ENCODE measurements at regions of chr13 and their contacts with region 1.

Region 1: GRCh38 chr13:46160471-46161066 is 21.4 kb downstream of the LCP1 start:
- DNase-seq: peak in 7 of 9 donors; percentile 59 to 78 (median 74)
- ATAC-seq: peak; percentile 91
- H3K4me3 ChIP-seq: no peak overlapping the region
- H3K4me3 Mint-ChIP-seq: peak overlapping the region; percentile 27 to 82 (median 74)
- H3K27ac ChIP-seq: peak overlapping the region; percentile 69
- H3K27ac Mint-ChIP-seq: peak overlapping the region; percentile 79 to 97 (median 91)
- H3K4me1 ChIP-seq: peaks cover 33 to 46% of the 10 kb centered on the region in 2 donors
- H3K4me1 Mint-ChIP-seq: peaks cover 49 to 58% (median 54%) of the 10 kb centered on the region in 7 donors
- H3K27me3 ChIP-seq: no peaks in the 10 kb centered on the region
- H3K27me3 Mint-ChIP-seq: no peaks in the 10 kb centered on the region

Region 2: GRCh38 chr13:46111151-46111550 is 49.4 kb before region 1 on chr13:
- CTCF ChIA-PET with region 1: no interaction called
- POLR2A ChIA-PET with region 1: no interaction called
- intact Hi-C with region 1: no loop called
- DNase-seq: no peak
- ATAC-seq: no peak
- H3K4me3 ChIP-seq: no peak overlapping the region
- H3K4me3 Mint-ChIP-seq: no peak overlapping the region
- H3K27ac ChIP-seq: no peak overlapping the region
- H3K27ac Mint-ChIP-seq: no peak overlapping the region
- H3K4me1 ChIP-seq: peaks cover 0 to 4% of the 10 kb centered on the region in 2 donors
- H3K4me1 Mint-ChIP-seq: peaks cover 5 to 15% (median 11%) of the 10 kb centered on the region in 7 donors
- H3K27me3 ChIP-seq: peaks cover 0 to 5% of the 10 kb centered on the region in 2 donors
- H3K27me3 Mint-ChIP-seq: peaks cover 12 to 40% (median 17%) of the 10 kb centered on the region in 5 donors

Region 3: GRCh38 chr13:46137627-46138317 is 22.8 kb before region 1 on chr13:
- CTCF ChIA-PET with region 1: interaction called, 22 read pairs
- POLR2A ChIA-PET with region 1: interaction called, 5 read pairs
- intact Hi-C with region 1: loop called in 1 of 2 experiments (anchors 2 kb)
- DNase-seq: no peak
- ATAC-seq: no peak
- H3K4me3 ChIP-seq: no peak overlapping the region
- H3K4me3 Mint-ChIP-seq: no peak overlapping the region
- H3K27ac ChIP-seq: peak overlapping the region; percentile 27
- H3K27ac Mint-ChIP-seq: peak overlapping the region; percentile 15 to 83 (median 72)
- H3K4me1 ChIP-seq: peaks cover 0 to under 1% of the 10 kb centered on the region in 2 donors
- H3K4me1 Mint-ChIP-seq: peaks cover 0 to 43% (median 16%) of the 10 kb centered on the region in 7 donors
- H3K27me3 ChIP-seq: no peaks in the 10 kb centered on the region
- H3K27me3 Mint-ChIP-seq: no peaks in the 10 kb centered on the region

Region 4: GRCh38 chr13:46146899-46147298 is 13.7 kb before region 1 on chr13:
- CTCF ChIA-PET with region 1: interaction called, 22 read pairs
- POLR2A ChIA-PET with region 1: interaction called, 8 read pairs
- intact Hi-C with region 1: loop called in 1 of 2 experiments (anchors 2 kb)
- DNase-seq: no peak
- ATAC-seq: no peak
- H3K4me3 ChIP-seq: no peak overlapping the region
- H3K4me3 Mint-ChIP-seq: no peak overlapping the region
- H3K27ac ChIP-seq: no peak overlapping the region
- H3K27ac Mint-ChIP-seq: peak overlapping the region; percentile 2 to 77 (median 51)
- H3K4me1 ChIP-seq: no peaks in the 10 kb centered on the region
- H3K4me1 Mint-ChIP-seq: peaks cover 12 to 47% (median 27%) of the 10 kb centered on the region in 7 donors
- H3K27me3 ChIP-seq: no peaks in the 10 kb centered on the region
- H3K27me3 Mint-ChIP-seq: no peaks in the 10 kb centered on the region

Region 5: DNA sequence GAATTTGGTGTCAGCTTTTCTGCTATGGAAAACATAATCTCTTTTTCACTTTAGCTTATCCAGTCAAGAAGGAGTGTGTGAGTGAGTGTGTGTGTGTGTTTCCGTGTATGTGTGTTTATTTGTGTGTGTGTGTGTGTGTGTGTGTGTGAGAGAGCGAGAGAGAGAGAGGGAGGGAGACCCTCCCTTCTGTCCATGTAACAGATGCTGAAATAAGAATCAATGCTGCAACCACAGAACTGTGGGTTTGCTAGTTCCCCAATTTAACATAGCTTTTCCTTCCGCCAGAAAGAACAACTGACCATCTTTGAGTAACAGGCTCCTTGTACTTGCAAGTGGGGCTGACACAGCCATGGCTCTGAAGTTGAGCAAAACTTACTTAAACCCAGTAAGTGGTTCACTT is 16.2 kb after region 1 on chr13:
- CTCF ChIA-PET with region 1: interaction called, 27 read pairs
- POLR2A ChIA-PET with region 1: interaction called, 26 read pairs
- intact Hi-C with region 1: loop called in 1 of 2 experiments (anchors 1 kb)
- DNase-seq: no peak
- ATAC-seq: peak; percentile 41
- H3K4me3 ChIP-seq: peak overlapping the region; percentile 66
- H3K4me3 Mint-ChIP-seq: peak overlapping the region; percentile 80 to 99 (median 92)
- H3K27ac ChIP-seq: peak overlapping the region; percentile 82
- H3K27ac Mint-ChIP-seq: peak overlapping the region; percentile 73 to 95 (median 89)
- H3K4me1 ChIP-seq: peaks cover 59 to 60% of the 10 kb centered on the region in 2 donors
- H3K4me1 Mint-ChIP-seq: peaks cover 64 to 81% (median 72%) of the 10 kb centered on the region in 7 donors
- H3K27me3 ChIP-seq: no peaks in the 10 kb centered on the region
- H3K27me3 Mint-ChIP-seq: peaks cover 0 to 3% (median 0%) of the 10 kb centered on the region in 5 donors

Region 6: DNA sequence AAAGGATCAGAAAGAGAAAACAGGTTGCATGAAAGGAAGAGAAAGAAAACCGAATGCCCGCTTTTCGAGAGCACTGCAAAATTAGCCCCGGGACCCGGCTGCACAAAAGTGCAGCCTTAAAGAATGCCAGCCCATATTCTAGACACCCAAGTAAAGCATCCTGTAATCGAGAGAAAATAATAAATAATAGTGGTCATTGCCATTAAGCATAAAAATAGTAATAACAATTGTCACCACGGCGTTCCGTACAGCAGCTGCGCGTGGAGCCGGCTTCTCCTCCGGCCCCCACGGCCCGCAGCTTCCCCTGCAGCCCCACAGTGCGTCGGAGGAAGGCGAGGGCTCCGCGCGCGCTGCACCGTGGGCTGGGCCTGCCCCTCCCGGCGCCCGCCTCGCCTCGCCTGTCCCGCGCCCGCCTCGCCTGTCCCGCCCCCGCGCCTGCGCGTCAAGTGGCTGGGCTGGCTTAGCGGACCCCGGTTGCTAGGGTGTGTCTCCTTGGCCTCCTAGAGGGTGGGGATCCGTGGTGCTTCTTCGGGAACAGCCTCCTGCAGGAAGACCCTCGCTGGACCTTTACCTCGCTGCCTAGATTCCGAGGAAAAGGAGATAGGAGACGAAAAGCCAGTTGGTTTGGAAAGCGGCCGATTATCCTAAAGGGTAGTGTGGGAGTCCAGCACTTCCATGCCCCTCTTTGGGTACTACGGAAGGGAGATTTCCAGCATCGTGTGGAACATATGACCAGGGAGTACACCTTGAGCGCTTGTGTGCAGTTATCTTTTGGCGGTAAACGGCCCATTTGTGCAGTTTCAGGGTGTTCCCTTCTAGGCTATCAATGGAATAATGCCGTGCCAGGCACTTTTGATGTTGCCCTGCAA is 51.1 kb after region 1 on chr13 and contains the start of gene LRRC63:
- CTCF ChIA-PET with region 1: interaction called, 5 read pairs
- POLR2A ChIA-PET with region 1: interaction called, 3 read pairs
- intact Hi-C with region 1: loop called in 1 of 2 experiments (anchors 1 kb)
- DNase-seq: peak; percentile 69 to 88 (median 80)
- ATAC-seq: peak; percentile 98
- H3K4me3 ChIP-seq: peak within 1 kb of the TSS; percentile 81
- H3K4me3 Mint-ChIP-seq: peak within 1 kb of the TSS; percentile 83 to 100 (median 93)
- H3K27ac ChIP-seq: peak within 1 kb of the TSS; percentile 88
- H3K27ac Mint-ChIP-seq: peak within 1 kb of the TSS; percentile 91 to 98 (median 94)
- H3K4me1 ChIP-seq: peaks cover 5 to 8% of the 10 kb centered on the region in 2 donors
- H3K4me1 Mint-ChIP-seq: peaks cover 7 to 37% (median 26%) of the 10 kb centered on the region in 7 donors
- H3K27me3 ChIP-seq: no peaks in the 10 kb centered on the region
- H3K27me3 Mint-ChIP-seq: peaks cover 0 to 6% (median 0%) of the 10 kb centered on the region in 5 donors
- total RNA-seq, gene LRRC63: 0.19 to 0.80 (median 0.49) TPM

Region 7: GRCh38 chr13:46288570-46289259 is 128.1 kb after region 1 on chr13:
- CTCF ChIA-PET with region 1: interaction called, 13 read pairs
- POLR2A ChIA-PET with region 1: interaction called, 3 read pairs
- intact Hi-C with region 1: loop called (anchors 1 kb)
- DNase-seq: peak in 7 of 9 donors; percentile 46 to 75 (median 70)
- ATAC-seq: peak; percentile 84
- H3K4me3 ChIP-seq: no peak overlapping the region
- H3K4me3 Mint-ChIP-seq: no peak overlapping the region
- H3K27ac ChIP-seq: no peak overlapping the region
- H3K27ac Mint-ChIP-seq: peak overlapping the region in 3 of 9 donors; percentile 8 to 18 (median 16)
- H3K4me1 ChIP-seq: peaks cover 0 to 17% of the 10 kb centered on the region in 2 donors
- H3K4me1 Mint-ChIP-seq: peaks cover 4 to 29% (median 15%) of the 10 kb centered on the region in 7 donors
- H3K27me3 ChIP-seq: no peaks in the 10 kb centered on the region
- H3K27me3 Mint-ChIP-seq: no peaks in the 10 kb centered on the region

Region 8: GRCh38 chr13:46295491-46296114 is 135.0 kb after region 1 on chr13:
- CTCF ChIA-PET with region 1: interaction called, 15 read pairs
- POLR2A ChIA-PET with region 1: interaction called, 7 read pairs
- intact Hi-C with region 1: loop called in 1 of 2 experiments (anchors 2 kb)
- DNase-seq: peak in 8 of 9 donors; percentile 28 to 90 (median 88)
- ATAC-seq: peak; percentile 94
- H3K4me3 ChIP-seq: peak overlapping the region; percentile 12
- H3K4me3 Mint-ChIP-seq: peak overlapping the region; percentile 4 to 87 (median 76)
- H3K27ac ChIP-seq: peak overlapping the region; percentile 77
- H3K27ac Mint-ChIP-seq: peak overlapping the region; percentile 92 to 99 (median 96)
- H3K4me1 ChIP-seq: peaks cover 35 to 52% of the 10 kb centered on the region in 2 donors
- H3K4me1 Mint-ChIP-seq: peaks cover 36 to 73% (median 68%) of the 10 kb centered on the region in 7 donors
- H3K27me3 ChIP-seq: no peaks in the 10 kb centered on the region
- H3K27me3 Mint-ChIP-seq: no peaks in the 10 kb centered on the region

Measured in naive thymus-derived CD4-positive, alpha-beta T cell (primary cell).